Aorta (tissue), 5 donors: ENCODE measurements at regions of chr15 and their contacts with region 1.

Region 1: GRCh38 chr15:76763554-76763953 is 141.6 kb downstream of the SCAPER start:
- DNase-seq: no peak
- ATAC-seq: no peak
- H3K4me3 ChIP-seq: no peak overlapping the region
- H3K27ac ChIP-seq: no peak overlapping the region
- H3K4me1 ChIP-seq: no peaks in the 10 kb centered on the region
- H3K27me3 ChIP-seq: no peaks in the 10 kb centered on the region

Region 2: GRCh38 chr15:75453703-75454470 is 1309.7 kb before region 1 on chr15:
- intact Hi-C with region 1: no loop called
- DNase-seq: peak; percentile 98 to 99
- ATAC-seq: peak; percentile 84
- H3K4me3 ChIP-seq: peak overlapping the region; percentile 93 to 95
- H3K27ac ChIP-seq: peak overlapping the region; percentile 84 to 99
- H3K4me1 ChIP-seq: no peaks in the 10 kb centered on the region
- H3K27me3 ChIP-seq: no peaks in the 10 kb centered on the region

Region 3: GRCh38 chr15:76802411-76802810 is 38.9 kb after region 1 on chr15:
- intact Hi-C with region 1: loop called in 1 of 2 experiments (anchors 2 kb)
- DNase-seq: no peak
- ATAC-seq: no peak
- H3K4me3 ChIP-seq: no peak overlapping the region
- H3K27ac ChIP-seq: no peak overlapping the region
- H3K4me1 ChIP-seq: no peaks in the 10 kb centered on the region
- H3K27me3 ChIP-seq: no peaks in the 10 kb centered on the region

Region 4: DNA sequence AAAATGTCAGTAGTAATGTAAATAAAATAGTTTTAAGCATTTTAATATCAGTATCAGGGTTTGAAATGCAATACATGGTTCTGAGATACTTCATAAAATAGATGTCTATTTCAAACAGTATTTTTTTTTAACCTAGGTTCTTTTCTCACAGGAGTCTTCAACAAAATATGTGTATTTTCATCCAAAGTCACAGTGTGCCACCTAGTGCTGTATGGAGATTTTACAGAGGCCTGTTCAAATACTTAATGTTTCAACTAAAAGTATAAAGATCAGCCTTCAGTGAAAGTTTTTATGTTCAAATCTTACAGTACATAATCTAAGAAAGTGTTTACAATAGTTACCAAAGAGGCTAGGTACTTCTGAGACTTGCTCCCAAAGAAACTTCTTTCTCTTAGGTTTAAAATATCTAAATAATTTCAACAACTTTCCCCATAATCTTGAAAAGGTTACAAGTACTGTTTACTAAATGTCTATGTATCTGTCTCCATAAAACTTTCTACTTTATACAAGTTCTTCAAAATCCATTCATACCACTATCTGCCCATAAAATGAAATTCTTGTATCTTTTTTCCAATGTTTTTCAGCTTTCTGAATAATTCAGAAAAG is 103.3 kb after region 1 on chr15:
- intact Hi-C with region 1: no loop called
- DNase-seq: no peak
- ATAC-seq: no peak
- H3K4me3 ChIP-seq: no peak overlapping the region
- H3K27ac ChIP-seq: no peak overlapping the region
- H3K4me1 ChIP-seq: no peaks in the 10 kb centered on the region
- H3K27me3 ChIP-seq: no peaks in the 10 kb centered on the region